ENCODE measurements at regions of chr21 and their contacts with region 1.

Region 1: DNA sequence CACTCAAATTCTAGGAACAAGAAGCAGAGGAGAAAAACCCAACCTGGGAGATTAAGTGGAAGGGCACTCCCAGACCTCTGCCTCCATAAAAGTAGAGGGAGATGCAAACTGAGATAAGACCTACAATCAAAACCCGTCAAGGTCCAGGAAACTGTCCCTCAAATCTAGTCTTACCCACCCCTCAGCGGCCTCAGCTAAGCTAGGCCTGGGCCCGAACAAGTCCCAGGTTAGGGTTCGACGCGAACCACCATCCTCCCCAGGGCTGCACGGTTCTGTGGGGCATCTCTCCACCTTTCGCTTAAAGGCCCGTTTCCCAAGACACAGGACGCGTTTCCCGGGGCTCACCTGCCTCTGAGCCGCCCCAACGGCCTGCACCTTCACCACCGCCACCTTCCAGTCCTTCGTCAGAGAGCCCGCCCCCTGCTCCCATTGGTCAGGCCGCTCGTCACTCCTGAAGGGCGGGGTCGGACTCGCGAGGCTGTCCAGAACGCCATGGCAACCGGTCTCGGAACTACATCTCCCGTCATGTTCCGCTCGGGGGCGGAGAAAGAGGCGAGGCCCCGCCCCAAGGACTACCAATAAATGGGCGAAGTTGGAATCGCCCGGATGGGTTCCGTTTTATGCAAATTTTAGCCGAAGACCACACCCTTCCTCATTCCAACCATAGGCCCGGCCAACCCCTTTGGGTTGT is at the start of gene CRYZL1:
- DNase-seq: peak; percentile 99
- ATAC-seq: peak; percentile 88
- H3K4me3 ChIP-seq: peak within 1 kb of the TSS; percentile 81 to 95 (median 85)
- H3K27ac ChIP-seq: peak within 1 kb of the TSS; percentile 89
- H3K4me1 ChIP-seq: peaks cover 37% of the 10 kb centered on the region
- H3K27me3 ChIP-seq: no peaks in the 10 kb centered on the region; a peak in 1 of 5 replicates
- CTCF ChIP-seq: no peak
- EP300 ChIP-seq: no peak
- POLR2A ChIP-seq: peak; percentile 83 to 87
- RAD21 ChIP-seq: 0 out of 2 replicates have a peak, but pooled peaks have one; percentile 10
- total RNA-seq, gene CRYZL1: 20.3 and 25.9 TPM in 2 replicates

Region 2: DNA sequence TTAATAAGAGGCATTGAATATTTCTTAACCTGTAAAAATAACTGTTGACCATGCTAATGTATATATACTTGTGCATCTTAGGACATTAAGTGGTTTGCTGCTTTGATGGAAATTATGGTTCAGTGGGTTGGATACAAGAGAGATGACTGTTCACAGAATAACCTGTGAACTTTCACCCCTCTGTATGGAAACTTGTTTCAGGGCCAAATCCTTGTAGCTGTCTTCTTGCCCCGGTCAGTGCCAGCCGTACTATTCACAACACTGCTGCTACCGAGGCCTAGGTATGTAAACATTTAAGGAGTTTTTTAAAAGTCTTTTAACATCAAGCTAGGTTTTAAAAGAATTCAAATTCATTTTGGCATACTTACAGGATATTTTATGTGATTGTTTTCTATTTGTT is 69.1 kb before region 1 on chr21:
- CTCF ChIA-PET with region 1: no interaction called
- POLR2A ChIA-PET with region 1: no interaction called
- in situ Hi-C with region 1: no loop called
- intact Hi-C with region 1: no loop called
- DNase-seq: no peak
- ATAC-seq: no peak
- H3K4me3 ChIP-seq: no peak overlapping the region
- H3K27ac ChIP-seq: no peak overlapping the region
- H3K4me1 ChIP-seq: peaks cover 76% of the 10 kb centered on the region
- H3K27me3 ChIP-seq: no peaks in the 10 kb centered on the region
- CTCF ChIP-seq: no peak
- EP300 ChIP-seq: no peak
- POLR2A ChIP-seq: no peak
- RAD21 ChIP-seq: no peak

Region 3: DNA sequence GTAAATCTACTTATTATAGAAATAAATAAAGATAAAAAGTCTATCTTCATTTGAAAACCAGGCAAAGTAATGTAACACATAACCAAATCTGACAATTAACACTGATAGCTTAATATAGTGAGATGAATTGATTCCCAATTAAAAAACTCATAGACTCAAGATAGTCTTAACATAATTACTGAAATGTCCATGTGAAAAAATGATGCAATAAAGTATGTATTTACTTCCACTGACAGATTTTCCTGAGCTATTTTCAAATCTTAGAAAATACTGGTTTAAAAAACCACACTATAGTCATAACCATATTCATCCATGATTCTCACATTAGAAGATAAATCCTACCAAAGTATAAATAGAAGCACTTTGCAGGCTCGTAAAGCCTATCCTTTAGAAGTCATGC is 43.4 kb before region 1 on chr21:
- CTCF ChIA-PET with region 1: no interaction called
- POLR2A ChIA-PET with region 1: no interaction called
- in situ Hi-C with region 1: no loop called
- intact Hi-C with region 1: no loop called
- DNase-seq: no peak
- ATAC-seq: no peak
- H3K4me3 ChIP-seq: no peak overlapping the region
- H3K27ac ChIP-seq: no peak overlapping the region
- H3K4me1 ChIP-seq: no peaks in the 10 kb centered on the region
- H3K27me3 ChIP-seq: no peaks in the 10 kb centered on the region
- CTCF ChIP-seq: no peak
- EP300 ChIP-seq: no peak
- POLR2A ChIP-seq: no peak
- RAD21 ChIP-seq: no peak

Region 4: DNA sequence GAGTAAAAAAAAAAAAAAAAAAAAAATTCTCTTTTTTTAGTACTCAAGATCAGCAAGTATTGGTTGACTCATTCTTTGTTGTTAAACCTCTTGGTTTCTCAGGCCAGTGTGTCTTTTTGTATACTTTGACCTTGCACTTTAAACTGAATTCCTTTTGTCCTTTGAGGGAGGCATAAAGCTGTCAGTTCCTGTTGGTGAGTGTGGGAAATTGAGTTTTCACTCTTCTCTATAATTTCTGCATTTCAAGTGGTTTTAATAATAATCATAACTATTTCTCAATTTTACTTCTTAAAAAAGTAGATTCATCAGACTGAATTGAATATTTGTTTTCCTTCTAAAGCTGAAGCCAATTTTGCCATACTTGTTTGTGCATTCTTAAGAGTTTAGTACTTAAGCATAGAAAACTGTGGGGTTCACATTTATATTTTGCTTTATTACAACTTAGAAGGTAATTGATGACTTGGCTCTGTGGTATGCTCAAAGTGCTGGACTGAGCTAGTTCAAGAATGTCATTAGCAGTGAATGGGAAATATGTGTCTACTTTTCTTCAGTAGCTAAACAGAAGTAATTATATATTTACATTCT is 44.2 kb after region 1 on chr21:
- CTCF ChIA-PET with region 1: no interaction called
- POLR2A ChIA-PET with region 1: interaction called, 3 read pairs
- in situ Hi-C with region 1: no loop called
- intact Hi-C with region 1: loop called (anchors 2 kb)
- DNase-seq: peak; percentile 77
- ATAC-seq: peak; percentile 64
- H3K4me3 ChIP-seq: peak overlapping the region in 2 of 3 experiments; percentile 13 to 37; a peak in 2 of 6 replicates
- H3K27ac ChIP-seq: peak overlapping the region; percentile 22
- H3K4me1 ChIP-seq: peaks cover 74% of the 10 kb centered on the region
- H3K27me3 ChIP-seq: no peaks in the 10 kb centered on the region
- CTCF ChIP-seq: no peak
- EP300 ChIP-seq: peak in 1 of 2 experiments; percentile 26; a peak in 1 of 4 replicates
- POLR2A ChIP-seq: no peak
- RAD21 ChIP-seq: no peak

Region 5: DNA sequence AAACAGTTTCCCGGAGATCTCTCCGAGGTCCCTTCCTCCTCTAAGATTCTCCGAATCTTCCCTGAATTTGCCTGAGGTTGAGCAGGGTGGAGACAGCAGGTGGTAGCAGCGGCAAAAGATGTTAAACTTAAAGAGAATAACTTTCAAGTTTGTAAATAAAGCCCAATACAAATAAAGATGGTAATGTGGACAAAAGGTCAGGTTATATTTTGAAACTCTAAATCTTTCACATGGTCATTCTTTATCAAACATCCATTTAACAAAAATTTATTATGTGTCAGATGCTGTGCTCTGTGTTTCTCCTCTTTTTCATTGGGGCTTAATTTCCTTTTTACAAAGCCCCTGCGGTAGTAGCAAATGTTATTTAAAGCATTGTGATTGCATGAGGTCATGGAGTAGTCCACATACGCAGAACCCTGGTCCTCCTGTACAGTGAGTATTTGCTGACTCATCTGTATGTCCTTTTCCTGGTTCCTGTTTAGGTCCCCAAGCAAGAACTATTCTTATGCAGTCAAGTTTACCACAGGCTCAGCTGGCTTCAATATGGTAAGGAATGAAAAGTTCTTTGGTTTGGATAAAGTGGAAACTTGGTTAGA is 120.1 kb after region 1 on chr21:
- CTCF ChIA-PET with region 1: no interaction called
- POLR2A ChIA-PET with region 1: interaction called, 3 read pairs
- in situ Hi-C with region 1: no loop called
- intact Hi-C with region 1: loop called (anchors 10 kb)
- DNase-seq: peak; percentile 73
- ATAC-seq: peak; percentile 65; the same call in 1 of the 3 replicates
- H3K4me3 ChIP-seq: no peak overlapping the region
- H3K27ac ChIP-seq: peak overlapping the region; percentile 30
- H3K4me1 ChIP-seq: peaks cover 13% of the 10 kb centered on the region
- H3K27me3 ChIP-seq: no peaks in the 10 kb centered on the region
- CTCF ChIP-seq: no peak
- EP300 ChIP-seq: no peak
- POLR2A ChIP-seq: no peak
- RAD21 ChIP-seq: no peak

Region 6: GRCh38 chr21:33894736-33895288 is 253.3 kb after region 1 on chr21:
- CTCF ChIA-PET with region 1: no interaction called
- POLR2A ChIA-PET with region 1: interaction called, 3 read pairs
- in situ Hi-C with region 1: no loop called
- intact Hi-C with region 1: loop called (anchors 2 kb)
- DNase-seq: peak; percentile 70
- ATAC-seq: peak; percentile 93
- H3K4me3 ChIP-seq: peak overlapping the region; percentile 33 to 73 (median 43)
- H3K27ac ChIP-seq: no peak overlapping the region
- H3K4me1 ChIP-seq: peaks cover 30% of the 10 kb centered on the region
- H3K27me3 ChIP-seq: peaks cover 0 to 24% of the 10 kb centered on the region in 2 experiments; a peak in 1 of 5 replicates
- CTCF ChIP-seq: peak; percentile 86
- EP300 ChIP-seq: no peak
- POLR2A ChIP-seq: no peak
- RAD21 ChIP-seq: peak; percentile 70

Measured in HepG2 (cell line).